Heart left ventricle (tissue), 16 donors: ENCODE measurements at regions of chr20 and their contacts with region 1.

Region 1: DNA sequence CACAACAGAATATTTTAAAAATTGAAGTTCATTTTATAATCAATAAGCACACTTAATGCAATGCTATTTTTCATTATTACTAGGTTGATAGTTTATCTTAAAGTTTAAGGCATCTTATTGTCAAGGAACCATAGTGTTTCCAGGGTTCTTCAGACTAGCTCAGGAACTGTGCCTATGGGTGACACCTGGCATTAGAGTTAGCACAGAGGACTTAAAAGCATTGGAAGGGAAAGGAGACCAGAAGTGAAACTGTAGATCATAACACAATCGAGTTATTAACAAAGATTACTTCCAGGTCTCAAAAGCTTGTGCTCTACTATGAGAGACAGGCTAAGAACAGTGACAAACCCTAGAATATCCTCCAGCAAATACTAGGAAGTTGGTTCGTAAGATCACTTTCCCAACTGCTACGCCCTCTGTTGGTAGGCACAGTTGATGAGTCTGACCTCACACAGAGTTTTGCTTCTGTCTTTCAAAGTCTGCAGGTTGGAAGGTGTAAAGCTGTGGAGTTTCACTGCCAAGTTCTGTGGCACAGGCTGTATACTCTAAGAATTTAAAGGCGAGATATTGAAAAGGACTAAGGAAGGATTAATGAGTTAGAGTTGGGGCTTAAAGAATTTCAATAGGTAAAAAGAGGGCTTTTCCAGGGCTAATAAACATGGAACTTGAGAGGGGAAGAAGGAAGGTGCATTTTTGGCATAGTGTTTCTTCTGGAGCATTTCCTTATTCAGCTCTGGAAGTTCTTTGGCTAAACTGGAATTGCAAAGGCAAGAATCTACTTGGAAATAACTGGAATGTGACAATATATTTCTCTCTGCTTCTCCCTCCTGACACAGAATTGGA is 531.3 kb upstream of the JAG1 start:
- DNase-seq: peak in 4 of 5 donors; percentile 56 to 72 (median 68)
- ATAC-seq: peak; percentile 82 to 95 (median 93)
- H3K4me3 ChIP-seq: no peak overlapping the region
- H3K27ac ChIP-seq: peak overlapping the region in 5 of 12 donors; percentile 15 to 46 (median 39)
- H3K4me1 ChIP-seq: peaks cover 0 to 17% (median 7%) of the 10 kb centered on the region in 12 donors
- H3K27me3 ChIP-seq: no peaks in the 10 kb centered on the region
- CTCF ChIP-seq: peak; percentile 65 to 91 (median 83)
- POLR2A ChIP-seq: no peak

Region 2: GRCh38 chr20:10553326-10553984 is 651.7 kb before region 1 on chr20:
- intact Hi-C with region 1: loop called in 8 of 10 experiments (anchors 5 to 10 kb)
- DNase-seq: peak; percentile 42 to 76 (median 60)
- ATAC-seq: peak; percentile 61 to 83 (median 66)
- H3K4me3 ChIP-seq: no peak overlapping the region
- H3K27ac ChIP-seq: no peak overlapping the region
- H3K4me1 ChIP-seq: peaks cover 0 to 43% (median 0%) of the 10 kb centered on the region in 12 donors
- H3K27me3 ChIP-seq: no peaks in the 10 kb centered on the region
- CTCF ChIP-seq: peak; percentile 68 to 89 (median 84)
- POLR2A ChIP-seq: no peak

Region 3: DNA sequence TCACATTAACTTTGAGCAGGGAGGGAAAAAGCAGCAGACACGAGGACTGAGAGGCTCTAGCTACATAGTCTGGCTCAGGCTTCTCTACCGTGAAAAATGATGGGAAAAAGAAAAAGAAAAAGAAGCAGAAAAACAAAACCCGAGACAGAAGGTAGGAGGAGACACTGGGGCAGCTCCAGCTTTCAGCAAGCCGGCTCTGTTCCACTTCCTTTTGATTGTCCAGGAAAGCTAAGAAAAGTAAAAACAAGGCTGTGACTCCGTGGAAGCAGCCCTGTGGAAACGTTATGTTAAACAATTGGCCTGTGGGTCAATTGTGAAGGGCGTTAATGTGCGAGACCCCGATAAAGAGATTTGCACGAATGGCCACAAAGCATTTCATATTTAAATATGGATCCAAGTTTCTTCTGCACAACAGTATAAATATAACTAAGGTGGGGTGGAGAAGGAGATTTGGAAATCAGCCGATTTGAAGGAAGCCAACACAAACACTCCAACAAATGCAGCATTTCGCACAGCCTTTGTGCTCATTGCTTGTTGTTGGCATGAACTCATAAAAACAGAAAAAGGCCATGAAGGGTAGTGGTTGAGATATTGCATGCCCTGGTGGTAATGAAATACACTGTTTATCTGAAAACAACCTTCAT is 294.5 kb before region 1 on chr20:
- intact Hi-C with region 1: loop called in 1 of 10 experiments (anchors 5 kb)
- DNase-seq: peak in 3 of 5 donors; percentile 26 to 46 (median 36)
- ATAC-seq: peak; percentile 60 to 84 (median 74)
- H3K4me3 ChIP-seq: peak overlapping the region in 6 of 12 donors; percentile 1 to 28 (median 22)
- H3K27ac ChIP-seq: peak overlapping the region; percentile 29 to 80 (median 54)
- H3K4me1 ChIP-seq: peaks cover 0 to 23% (median 3%) of the 10 kb centered on the region in 12 donors
- H3K27me3 ChIP-seq: no peaks in the 10 kb centered on the region
- CTCF ChIP-seq: peak in 8 of 12 donors; percentile 2 to 57 (median 32)
- POLR2A ChIP-seq: no peak

Region 4: GRCh38 chr20:11020712-11021111 is 184.4 kb before region 1 on chr20:
- intact Hi-C with region 1: no loop called
- DNase-seq: no peak
- ATAC-seq: no peak
- H3K4me3 ChIP-seq: no peak overlapping the region
- H3K27ac ChIP-seq: no peak overlapping the region
- H3K4me1 ChIP-seq: no peaks in the 10 kb centered on the region
- H3K27me3 ChIP-seq: no peaks in the 10 kb centered on the region
- CTCF ChIP-seq: no peak
- POLR2A ChIP-seq: no peak

Region 5: DNA sequence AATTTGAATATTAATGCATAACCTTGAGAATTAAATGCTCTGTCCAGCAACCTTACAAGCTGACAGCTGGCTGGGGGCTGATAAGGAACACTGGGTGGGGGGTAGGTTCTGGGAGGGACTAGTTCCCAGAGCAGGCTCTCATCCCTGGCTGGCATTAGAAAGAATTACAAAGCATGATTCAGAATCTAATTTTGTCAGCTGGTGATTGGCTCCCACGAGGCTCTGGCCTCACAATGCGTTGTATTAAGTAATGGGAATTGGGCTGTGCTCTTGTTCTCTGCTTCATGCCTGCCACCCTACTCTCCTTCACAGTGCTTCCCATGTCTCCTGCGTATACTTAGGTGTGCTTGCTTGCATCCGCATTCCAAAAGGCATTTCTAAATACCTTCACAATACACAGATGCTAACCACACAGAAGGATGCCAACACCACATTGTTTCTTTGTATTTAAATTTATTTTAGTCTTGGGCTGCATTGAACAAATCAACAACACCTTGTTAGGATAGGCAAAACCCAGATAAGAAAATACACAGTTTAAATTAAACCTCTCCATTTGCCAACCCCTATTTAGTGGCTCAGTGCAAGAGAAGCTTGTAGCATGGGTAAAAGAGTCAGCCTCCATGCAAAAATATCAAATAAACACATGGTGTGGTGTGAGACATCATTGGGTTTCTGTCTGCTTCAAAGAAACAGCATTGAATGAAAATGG is 96.9 kb before region 1 on chr20:
- intact Hi-C with region 1: loop called in 1 of 10 experiments (anchors 5 kb)
- DNase-seq: peak in 4 of 5 donors; percentile 49 to 61 (median 58)
- ATAC-seq: peak; percentile 96 to 99 (median 98)
- H3K4me3 ChIP-seq: no peak overlapping the region
- H3K27ac ChIP-seq: peak overlapping the region in 9 of 12 donors; percentile 28 to 77 (median 52)
- H3K4me1 ChIP-seq: peaks cover 0 to 24% (median 12%) of the 10 kb centered on the region in 12 donors
- H3K27me3 ChIP-seq: no peaks in the 10 kb centered on the region
- CTCF ChIP-seq: no peak
- POLR2A ChIP-seq: no peak